GM10248 (cell line): ENCODE measurements at regions of chr3 and their contacts with region 1.

Region 1: GRCh38 chr3:39189959-39190269 is 2.5 kb downstream of the XIRP1 start:
- DNase-seq: peak; percentile 82
- CTCF ChIP-seq: peak; percentile 65

Region 2: GRCh38 chr3:39000008-39000450 is 189.9 kb before region 1 on chr3:
- CTCF ChIA-PET with region 1: no interaction called
- POLR2A ChIA-PET with region 1: no interaction called
- DNase-seq: peak; percentile 71
- CTCF ChIP-seq: peak; percentile 82

Region 3: GRCh38 chr3:39171860-39172259 is 18.1 kb before region 1 on chr3:
- CTCF ChIA-PET with region 1: interaction called, 21 read pairs
- POLR2A ChIA-PET with region 1: no interaction called
- DNase-seq: no peak
- CTCF ChIP-seq: no peak

Region 4: DNA sequence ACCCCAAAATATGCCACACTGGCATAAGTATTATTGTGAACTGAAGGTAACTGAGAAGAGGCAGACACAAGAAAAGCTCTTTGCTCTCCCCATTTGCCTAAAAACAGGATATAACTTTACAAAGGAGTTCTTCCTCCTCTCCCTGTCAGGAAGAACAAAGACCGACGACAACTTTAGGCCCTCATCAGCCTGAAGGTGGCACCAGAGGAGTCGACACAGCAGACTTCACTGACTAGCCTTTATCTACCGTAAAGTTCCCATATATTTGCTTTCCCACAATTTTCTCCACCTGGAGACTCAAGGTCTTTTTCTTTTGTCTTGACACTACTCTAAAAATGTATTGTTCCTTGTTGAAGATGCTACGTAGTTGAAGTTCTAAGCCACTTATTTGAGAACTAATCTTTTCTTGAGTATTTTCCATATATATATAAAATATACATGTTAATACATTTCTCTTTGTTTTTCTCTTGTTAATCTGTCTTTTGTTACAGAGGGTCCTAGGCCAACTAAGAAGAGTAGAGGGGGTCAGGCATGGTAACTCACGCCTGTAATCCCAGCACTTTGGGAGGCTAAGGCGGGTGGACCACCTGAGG is 18.6 kb after region 1 on chr3:
- CTCF ChIA-PET with region 1: interaction called, 55 read pairs
- POLR2A ChIA-PET with region 1: no interaction called
- DNase-seq: no peak
- CTCF ChIP-seq: peak; percentile 74

Region 5: GRCh38 chr3:39216176-39216790 is 26.4 kb after region 1 on chr3:
- CTCF ChIA-PET with region 1: interaction called, 55 read pairs
- POLR2A ChIA-PET with region 1: no interaction called
- DNase-seq: peak; percentile 70
- CTCF ChIP-seq: no peak

Region 6: DNA sequence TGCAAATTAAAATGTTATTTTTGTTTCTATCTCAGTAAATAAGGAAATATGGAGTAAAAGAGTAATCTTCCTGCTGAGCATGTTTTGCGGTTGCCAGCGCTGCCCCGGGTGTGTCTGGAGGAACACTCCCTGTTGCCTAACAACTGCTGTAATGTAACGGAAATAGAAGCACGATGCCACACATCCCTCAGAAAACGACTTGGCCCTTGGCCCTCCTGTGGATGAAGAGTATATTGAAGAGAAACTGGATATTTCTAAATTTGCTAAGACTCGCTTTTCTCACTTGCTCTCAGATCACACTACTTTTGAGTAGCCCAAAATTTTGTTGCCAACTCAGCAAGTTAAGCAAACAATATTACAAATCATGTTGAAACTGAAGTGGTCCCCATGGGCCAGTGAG is 71.0 kb after region 1 on chr3:
- CTCF ChIA-PET with region 1: interaction called, 18 read pairs
- POLR2A ChIA-PET with region 1: no interaction called
- DNase-seq: peak; percentile 46
- CTCF ChIP-seq: peak; percentile 5

Region 7: DNA sequence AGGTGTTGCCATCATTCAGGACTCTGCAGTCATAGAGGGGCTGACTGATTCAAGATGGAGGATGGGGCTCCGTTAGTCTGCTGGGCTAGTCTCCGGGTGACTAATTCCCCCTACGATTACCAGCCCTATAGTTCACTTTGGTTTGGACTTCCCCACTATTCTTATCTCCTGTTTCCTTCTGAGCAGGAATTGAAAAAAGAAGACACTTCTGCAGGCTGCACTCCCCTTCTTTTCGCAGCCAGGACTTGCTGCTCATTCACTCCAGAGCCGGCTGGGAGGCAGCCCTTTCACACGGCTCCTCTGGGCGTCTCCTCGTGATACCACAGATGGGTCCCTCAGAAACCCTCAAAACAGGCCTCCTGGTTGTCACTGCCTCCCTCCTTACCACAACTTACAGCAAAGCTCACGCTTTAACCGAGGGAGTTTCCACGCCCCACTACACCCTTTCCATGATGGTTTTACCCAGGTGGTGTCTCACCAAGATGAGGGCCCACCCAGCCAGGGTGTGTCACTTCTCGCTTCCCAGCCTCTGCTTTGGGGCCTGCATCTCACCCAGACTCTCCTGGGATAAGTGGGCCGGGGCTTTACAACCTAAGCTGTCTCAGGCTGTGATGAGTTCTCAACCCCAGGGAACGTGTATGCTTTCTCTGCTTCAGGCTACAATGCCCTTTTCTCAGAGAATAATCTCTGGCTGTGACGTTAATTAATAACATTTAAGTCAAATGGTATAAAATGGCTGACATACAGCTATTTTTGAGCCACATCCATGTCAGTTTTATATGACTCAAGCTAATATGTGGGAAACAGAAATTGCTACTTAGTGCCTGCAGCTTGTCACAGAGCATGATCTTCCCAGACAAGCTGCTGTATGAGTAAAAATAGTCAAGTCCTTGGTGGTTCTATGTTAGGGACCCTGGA is 78.0 kb after region 1 on chr3:
- CTCF ChIA-PET with region 1: interaction called, 18 read pairs
- POLR2A ChIA-PET with region 1: no interaction called
- DNase-seq: no peak
- CTCF ChIP-seq: no peak

Region 8: GRCh38 chr3:39378088-39378487 is 188.2 kb after region 1 on chr3:
- CTCF ChIA-PET with region 1: interaction called, 52 read pairs
- POLR2A ChIA-PET with region 1: no interaction called
- DNase-seq: peak; percentile 70
- CTCF ChIP-seq: peak; percentile 89